AG04450 (cell line): ENCODE measurements at regions of chr6 and their contacts with region 1.

Region 1: GRCh38 chr6:42879372-42880239 is at the start of gene RPL7L1:
- DNase-seq: peak; percentile 69
- H3K4me3 ChIP-seq: peak within 1 kb of the TSS; percentile 91
- H3K27ac ChIP-seq: peak within 1 kb of the TSS; percentile 95
- H3K27me3 ChIP-seq: no peaks in the 10 kb centered on the region
- CTCF ChIP-seq: no peak; the same call in 1 of the 2 replicates
- polyA plus RNA-seq, gene RPL7L1: 45.0 and 48.5 TPM in 2 replicates

Region 2: GRCh38 chr6:42782622-42783176 is 96.9 kb before region 1 on chr6:
- CTCF ChIA-PET with region 1: no interaction called
- POLR2A ChIA-PET with region 1: interaction called, 11 read pairs
- DNase-seq: peak; percentile 84
- H3K4me3 ChIP-seq: peak overlapping the region; percentile 81
- H3K27ac ChIP-seq: peak overlapping the region; percentile 96
- H3K27me3 ChIP-seq: no peaks in the 10 kb centered on the region
- CTCF ChIP-seq: no peak

Region 3: GRCh38 chr6:42890311-42891198 is 10.9 kb after region 1 on chr6:
- CTCF ChIA-PET with region 1: no interaction called
- POLR2A ChIA-PET with region 1: interaction called, 21 read pairs
- DNase-seq: peak; percentile 93
- H3K4me3 ChIP-seq: peak overlapping the region; percentile 97
- H3K27ac ChIP-seq: peak overlapping the region; percentile 97
- H3K27me3 ChIP-seq: no peaks in the 10 kb centered on the region
- CTCF ChIP-seq: no peak